ENCODE measurements at regions of chrX and their contacts with region 1.

Region 1: GRCh38 chrX:40647307-40648197 is at the start of gene CXorf38:
- DNase-seq: peak; percentile 92 to 98 (median 96)
- H3K4me3 ChIP-seq: peak within 1 kb of the TSS; percentile 57 to 66
- H3K4me3 Mint-ChIP-seq: peak within 1 kb of the TSS; percentile 92 to 99 (median 97)
- H3K27ac ChIP-seq: peak within 1 kb of the TSS; percentile 84
- H3K27ac Mint-ChIP-seq: peak within 1 kb of the TSS; percentile 93 to 99 (median 98)
- H3K4me1 ChIP-seq: peaks cover 34% of the 10 kb centered on the region
- H3K4me1 Mint-ChIP-seq: peaks cover 18 to 55% (median 29%) of the 10 kb centered on the region in 4 donors
- H3K27me3 ChIP-seq: no peaks in the 10 kb centered on the region
- H3K27me3 Mint-ChIP-seq: no peaks in the 10 kb centered on the region
- total RNA-seq, gene CXorf38: 25.7 to 26.7 TPM

Region 2: DNA sequence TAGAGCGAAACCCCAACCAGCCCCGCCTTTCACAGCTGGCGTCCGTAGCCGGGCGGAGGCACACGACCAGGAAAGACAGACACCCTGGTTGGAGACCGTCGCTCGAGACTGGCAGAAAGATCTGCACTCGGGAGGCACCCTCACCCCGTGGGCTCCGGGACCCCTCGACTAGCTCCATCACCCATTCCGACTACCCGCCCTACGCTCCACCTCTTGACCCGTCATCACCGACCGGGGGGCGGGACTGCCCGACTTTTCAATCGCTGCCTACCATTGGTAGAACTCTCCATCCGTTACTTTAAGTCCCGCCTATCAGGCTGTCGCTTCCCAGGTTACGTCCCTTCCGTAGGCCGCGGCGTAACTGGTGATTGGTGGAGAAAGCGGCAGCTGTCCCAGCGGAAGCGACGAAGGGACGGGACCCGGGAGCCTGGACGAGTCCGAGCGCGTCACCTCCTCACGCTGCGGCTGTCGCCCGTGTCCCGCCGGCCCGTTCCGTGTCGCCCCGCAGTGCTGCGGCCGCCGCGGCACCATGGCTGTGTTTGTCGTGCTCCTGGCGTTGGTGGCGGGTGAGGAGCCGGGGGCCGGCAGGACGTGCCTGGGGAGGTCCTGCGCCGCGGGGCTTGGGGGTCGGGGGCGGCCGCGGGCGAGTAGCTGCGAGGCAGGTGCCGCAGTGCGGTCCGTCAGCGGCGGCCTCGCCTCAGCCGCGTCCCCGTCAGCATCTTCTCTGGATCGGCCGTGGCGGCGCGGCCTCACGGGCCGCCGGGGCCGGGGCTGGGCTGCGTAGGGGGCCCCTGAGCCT is 66.8 kb before region 1 on chrX and contains the start of gene ATP6AP2:
- CTCF ChIA-PET with region 1: no interaction called
- POLR2A ChIA-PET with region 1: interaction called, 3 read pairs
- intact Hi-C with region 1: loop called (anchors 1 kb)
- DNase-seq: peak; percentile 85 to 93 (median 90)
- H3K4me3 ChIP-seq: peak within 1 kb of the TSS; percentile 61 to 82
- H3K4me3 Mint-ChIP-seq: peak within 1 kb of the TSS; percentile 90 to 95 (median 92)
- H3K27ac ChIP-seq: peak within 1 kb of the TSS; percentile 84
- H3K27ac Mint-ChIP-seq: peak within 1 kb of the TSS; percentile 85 to 98 (median 96)
- H3K4me1 ChIP-seq: peaks cover 21% of the 10 kb centered on the region
- H3K4me1 Mint-ChIP-seq: peaks cover 15 to 35% (median 26%) of the 10 kb centered on the region in 4 donors
- H3K27me3 ChIP-seq: no peaks in the 10 kb centered on the region
- H3K27me3 Mint-ChIP-seq: no peaks in the 10 kb centered on the region
- total RNA-seq, gene ATP6AP2: 80.9 to 86.5 TPM

Region 3: GRCh38 chrX:40612511-40612910 is 35.0 kb before region 1 on chrX:
- CTCF ChIA-PET with region 1: no interaction called
- POLR2A ChIA-PET with region 1: no interaction called
- intact Hi-C with region 1: no loop called
- DNase-seq: no peak
- H3K4me3 ChIP-seq: no peak overlapping the region
- H3K4me3 Mint-ChIP-seq: no peak overlapping the region
- H3K27ac ChIP-seq: no peak overlapping the region
- H3K27ac Mint-ChIP-seq: no peak overlapping the region
- H3K4me1 ChIP-seq: no peaks in the 10 kb centered on the region
- H3K4me1 Mint-ChIP-seq: no peaks in the 10 kb centered on the region
- H3K27me3 ChIP-seq: no peaks in the 10 kb centered on the region
- H3K27me3 Mint-ChIP-seq: no peaks in the 10 kb centered on the region

Region 4: GRCh38 chrX:40625294-40625693 is 22.3 kb before region 1 on chrX:
- CTCF ChIA-PET with region 1: no interaction called
- POLR2A ChIA-PET with region 1: no interaction called
- intact Hi-C with region 1: no loop called
- DNase-seq: no peak
- H3K4me3 ChIP-seq: no peak overlapping the region
- H3K4me3 Mint-ChIP-seq: no peak overlapping the region
- H3K27ac ChIP-seq: no peak overlapping the region
- H3K27ac Mint-ChIP-seq: peak overlapping the region in 3 of 7 donors; percentile 22 to 42 (median 29)
- H3K4me1 ChIP-seq: no peaks in the 10 kb centered on the region
- H3K4me1 Mint-ChIP-seq: no peaks in the 10 kb centered on the region
- H3K27me3 ChIP-seq: no peaks in the 10 kb centered on the region
- H3K27me3 Mint-ChIP-seq: no peaks in the 10 kb centered on the region

Region 5: GRCh38 chrX:40735325-40736169 is 88.0 kb after region 1 on chrX and contains the start of gene MED14:
- CTCF ChIA-PET with region 1: interaction called, 8 read pairs
- POLR2A ChIA-PET with region 1: interaction called, 16 read pairs
- intact Hi-C with region 1: loop called (anchors 1 kb)
- DNase-seq: peak; percentile 95 to 96 (median 96)
- H3K4me3 ChIP-seq: peak within 1 kb of the TSS; percentile 52 to 73
- H3K4me3 Mint-ChIP-seq: peak within 1 kb of the TSS; percentile 93 to 98 (median 97)
- H3K27ac ChIP-seq: peak within 1 kb of the TSS; percentile 94
- H3K27ac Mint-ChIP-seq: peak within 1 kb of the TSS; percentile 97 to 100 (median 99)
- H3K4me1 ChIP-seq: peaks cover 28% of the 10 kb centered on the region
- H3K4me1 Mint-ChIP-seq: peaks cover 23 to 76% (median 43%) of the 10 kb centered on the region in 4 donors
- H3K27me3 ChIP-seq: no peaks in the 10 kb centered on the region
- H3K27me3 Mint-ChIP-seq: no peaks in the 10 kb centered on the region
- total RNA-seq, gene MED14: 37.9 to 39.0 TPM

Region 6: DNA sequence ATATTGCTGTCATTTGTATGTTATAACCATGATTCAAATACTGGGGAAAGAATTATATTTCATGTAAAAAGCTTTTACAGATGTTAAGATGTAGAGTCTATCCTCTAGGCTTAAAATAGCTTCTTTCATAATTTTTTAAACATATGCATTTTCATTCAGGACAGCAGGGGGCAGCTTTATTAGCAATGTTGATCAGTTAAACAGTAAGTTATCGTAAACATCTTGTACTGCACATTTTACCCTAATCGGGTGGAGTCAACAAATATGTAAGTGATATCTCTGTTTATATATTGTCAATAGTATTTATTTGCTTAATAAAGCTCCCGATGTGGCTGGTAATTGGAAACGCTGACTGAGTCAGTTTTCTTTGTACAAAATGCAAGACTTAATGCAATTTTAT is 230.3 kb after region 1 on chrX:
- CTCF ChIA-PET with region 1: interaction called, 4 read pairs
- POLR2A ChIA-PET with region 1: no interaction called
- intact Hi-C with region 1: loop called (anchors 5 kb)
- DNase-seq: peak; percentile 32 to 43 (median 40)
- H3K4me3 ChIP-seq: no peak overlapping the region
- H3K4me3 Mint-ChIP-seq: peak overlapping the region in 1 of 8 donors; percentile 3
- H3K27ac ChIP-seq: no peak overlapping the region
- H3K27ac Mint-ChIP-seq: no peak overlapping the region
- H3K4me1 ChIP-seq: peaks cover 4% of the 10 kb centered on the region
- H3K4me1 Mint-ChIP-seq: peaks cover 0 to 4% (median 0%) of the 10 kb centered on the region in 4 donors
- H3K27me3 ChIP-seq: no peaks in the 10 kb centered on the region
- H3K27me3 Mint-ChIP-seq: no peaks in the 10 kb centered on the region

Region 7: GRCh38 chrX:41333744-41334259 is 686.2 kb after region 1 on chrX and contains the start of gene DDX3X:
- CTCF ChIA-PET with region 1: no interaction called
- POLR2A ChIA-PET with region 1: no interaction called
- intact Hi-C with region 1: loop called (anchors 5 kb)
- DNase-seq: peak; percentile 83 to 95 (median 94)
- H3K4me3 ChIP-seq: peak within 1 kb of the TSS; percentile 84 to 98
- H3K4me3 Mint-ChIP-seq: peak within 1 kb of the TSS; percentile 91 to 99 (median 98)
- H3K27ac ChIP-seq: peak within 1 kb of the TSS; percentile 98
- H3K27ac Mint-ChIP-seq: peak within 1 kb of the TSS; percentile 99 to 100 (median 100)
- H3K4me1 ChIP-seq: peaks cover 27% of the 10 kb centered on the region
- H3K4me1 Mint-ChIP-seq: peaks cover 11 to 65% (median 44%) of the 10 kb centered on the region in 4 donors
- H3K27me3 ChIP-seq: no peaks in the 10 kb centered on the region
- H3K27me3 Mint-ChIP-seq: no peaks in the 10 kb centered on the region
- total RNA-seq, gene DDX3X: 318 to 320 TPM

Region 8: GRCh38 chrX:41923257-41923969 is 1275.9 kb after region 1 on chrX and contains the start of gene CASK:
- CTCF ChIA-PET with region 1: no interaction called
- POLR2A ChIA-PET with region 1: no interaction called
- intact Hi-C with region 1: loop called (anchors 5 kb)
- DNase-seq: peak; percentile 88 to 90 (median 89)
- H3K4me3 ChIP-seq: peak within 1 kb of the TSS; percentile 55 to 72
- H3K4me3 Mint-ChIP-seq: peak within 1 kb of the TSS; percentile 88 to 96 (median 92)
- H3K27ac ChIP-seq: peak within 1 kb of the TSS; percentile 58
- H3K27ac Mint-ChIP-seq: peak within 1 kb of the TSS; percentile 86 to 95 (median 94)
- H3K4me1 ChIP-seq: peaks cover 21% of the 10 kb centered on the region
- H3K4me1 Mint-ChIP-seq: peaks cover 10 to 43% (median 22%) of the 10 kb centered on the region in 4 donors
- H3K27me3 ChIP-seq: no peaks in the 10 kb centered on the region
- H3K27me3 Mint-ChIP-seq: no peaks in the 10 kb centered on the region
- total RNA-seq, gene CASK: 115 to 116 TPM